ENCODE measurements at regions of chr11 and their contacts with region 1.

Region 1: DNA sequence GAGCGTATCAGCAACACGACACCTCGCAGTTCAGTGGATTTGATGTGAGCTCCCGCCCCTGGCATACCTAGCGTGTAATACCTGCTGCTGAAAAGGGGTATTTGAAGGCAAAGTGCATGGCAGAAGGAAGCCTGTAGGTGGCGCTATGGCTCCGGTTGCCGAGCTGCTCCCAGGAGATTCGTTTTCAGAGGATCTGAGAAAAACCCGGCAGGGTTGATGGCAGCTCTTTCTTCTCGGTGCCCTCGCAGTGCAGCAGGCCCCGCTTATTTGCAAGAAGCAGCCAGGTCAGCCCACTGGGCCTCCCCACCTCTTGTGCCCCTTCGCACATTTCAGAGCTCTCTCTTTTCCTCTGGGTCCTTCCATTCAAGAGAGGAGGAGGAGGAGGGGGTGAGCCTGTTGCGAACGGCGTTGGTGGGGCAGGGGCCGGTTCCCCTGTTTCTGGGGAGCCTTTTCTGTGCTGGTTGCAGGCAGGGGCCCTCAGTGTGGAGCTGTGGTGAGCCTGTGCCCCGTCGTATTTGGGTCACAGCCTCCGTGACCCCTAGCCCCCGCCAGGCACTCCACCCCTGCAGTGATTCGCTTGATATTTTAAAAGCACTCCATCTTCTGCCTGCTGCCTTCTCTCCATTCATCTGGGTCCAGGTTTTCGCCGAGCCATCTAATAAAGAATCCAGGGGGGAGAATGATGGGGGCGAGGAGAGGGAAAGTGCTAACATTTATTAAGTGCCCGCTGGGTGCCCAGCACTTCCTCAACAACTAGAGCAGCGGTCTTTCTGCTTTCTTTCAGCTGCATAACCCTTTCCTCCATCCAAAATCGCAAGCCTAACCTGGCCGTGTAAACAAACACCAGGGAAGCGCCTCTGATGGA is 85.3 kb upstream of the SYT13 start:
- DNase-seq: peak; percentile 64
- H3K4me3 ChIP-seq: no peak overlapping the region
- H3K27ac ChIP-seq: no peak overlapping the region
- H3K4me1 ChIP-seq: no peaks in the 10 kb centered on the region
- CTCF ChIP-seq: peak; percentile 92

Region 2: GRCh38 chr11:45655347-45655756 is 283.9 kb after region 1 on chr11:
- CTCF ChIA-PET with region 1: no interaction called
- POLR2A ChIA-PET with region 1: no interaction called
- intact Hi-C with region 1: loop called (anchors 1 kb)
- DNase-seq: peak; percentile 66
- H3K4me3 ChIP-seq: no peak overlapping the region
- H3K27ac ChIP-seq: no peak overlapping the region
- H3K4me1 ChIP-seq: peaks cover 5% of the 10 kb centered on the region
- CTCF ChIP-seq: peak; percentile 92

Region 3: GRCh38 chr11:45771566-45772448 is 400.3 kb after region 1 on chr11:
- CTCF ChIA-PET with region 1: no interaction called
- POLR2A ChIA-PET with region 1: no interaction called
- intact Hi-C with region 1: loop called (anchors 5 kb)
- DNase-seq: peak; percentile 82
- H3K4me3 ChIP-seq: peak overlapping the region; percentile 62
- H3K27ac ChIP-seq: no peak overlapping the region
- H3K4me1 ChIP-seq: peaks cover 21% of the 10 kb centered on the region
- CTCF ChIP-seq: peak; percentile 93

Measured in OCI-LY7 (cell line).